Ovary (tissue), 10 donors: ENCODE measurements at regions of chr11 and their contacts with region 1.

Region 1: DNA sequence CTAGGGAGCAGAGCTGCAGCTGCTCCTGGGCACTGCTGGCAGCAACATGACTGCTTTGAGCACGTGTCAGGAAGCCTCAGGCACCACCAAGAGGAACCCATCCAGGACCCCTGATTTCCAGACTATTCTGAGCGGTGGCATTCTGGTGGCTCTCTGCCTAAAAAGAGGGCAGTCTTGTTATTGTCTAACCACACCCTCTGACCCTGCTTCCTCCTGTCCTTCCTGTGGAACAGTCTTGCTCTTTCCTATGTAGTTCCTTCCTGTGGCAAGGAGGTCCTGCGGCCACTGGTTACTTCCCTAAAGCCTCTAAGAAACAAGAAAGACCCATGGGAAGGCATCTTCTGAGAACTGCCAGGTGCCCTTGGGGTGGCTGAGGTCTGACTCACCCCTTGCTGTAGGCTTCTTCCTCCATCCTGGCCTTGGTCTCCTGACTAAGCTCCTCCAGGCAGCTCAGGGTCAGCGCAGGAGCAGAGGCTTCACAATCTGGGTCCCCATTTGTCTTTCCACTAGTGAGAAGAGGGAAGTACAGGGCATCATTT is 13.1 kb upstream of the LYVE1 start:
- DNase-seq: peak in 1 of 5 donors; percentile 37
- H3K4me3 ChIP-seq: no peak overlapping the region
- H3K27ac ChIP-seq: no peak overlapping the region
- H3K4me1 ChIP-seq: peaks cover 16% of the 10 kb centered on the region
- H3K27me3 ChIP-seq: no peaks in the 10 kb centered on the region
- CTCF ChIP-seq: no peak
- EP300 ChIP-seq: no peak
- POLR2A ChIP-seq: no peak

Region 2: GRCh38 chr11:10657308-10658271 is 76.0 kb after region 1 on chr11:
- intact Hi-C with region 1: loop called in 1 of 4 experiments (anchors 5 kb)
- DNase-seq: peak in 3 of 5 donors; percentile 42 to 53 (median 42)
- H3K4me3 ChIP-seq: no peak overlapping the region
- H3K27ac ChIP-seq: peak overlapping the region; percentile 27 to 57
- H3K4me1 ChIP-seq: peaks cover 39% of the 10 kb centered on the region
- H3K27me3 ChIP-seq: no peaks in the 10 kb centered on the region
- CTCF ChIP-seq: no peak
- EP300 ChIP-seq: no peak
- POLR2A ChIP-seq: no peak